ENCODE measurements at regions of chr7 and their contacts with region 1.

Region 1: DNA sequence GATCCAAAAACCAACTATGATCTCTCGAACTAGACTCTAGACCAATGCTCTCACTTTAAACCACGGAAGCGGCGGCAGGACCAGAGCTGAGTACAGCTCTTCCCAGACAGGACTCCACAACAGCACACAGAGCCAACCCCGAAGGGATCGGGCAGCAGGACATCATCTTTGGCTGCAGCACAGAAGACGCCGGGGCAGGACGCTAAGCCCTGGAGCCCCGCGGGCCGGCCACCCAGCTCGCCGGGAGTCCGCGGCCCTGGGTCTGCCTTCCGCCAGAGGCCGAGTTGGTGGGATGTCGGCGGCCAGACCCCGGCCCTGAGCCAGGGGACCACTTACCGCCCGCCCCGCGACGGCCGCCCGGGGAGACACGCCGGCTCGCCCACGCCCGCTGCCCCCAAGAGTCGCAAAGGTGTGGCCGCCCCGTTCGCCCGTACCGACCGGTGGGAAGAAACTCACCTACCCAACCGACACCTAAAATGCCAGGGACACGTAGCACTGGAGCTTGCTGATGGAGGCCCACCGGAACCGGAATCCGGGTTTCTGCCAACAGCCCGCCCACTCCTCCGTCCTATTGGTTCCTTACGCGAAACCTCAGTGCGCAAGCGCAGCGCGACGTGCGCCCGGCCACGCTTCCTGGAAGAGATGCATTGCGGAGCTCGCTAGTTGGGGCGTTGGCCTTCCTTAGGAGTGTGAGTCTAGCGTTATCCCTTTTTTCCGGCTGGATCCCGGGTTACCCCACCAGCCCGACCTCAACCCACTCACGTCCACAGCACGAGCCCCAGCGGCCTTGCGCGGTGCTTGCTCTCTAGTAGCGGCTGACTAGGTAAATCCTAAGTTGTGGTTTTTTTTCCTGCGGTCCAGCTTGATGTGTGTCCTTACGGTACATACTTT is at the start of gene SEC61G:
- DNase-seq: peak; percentile 97
- H3K4me3 Mint-ChIP-seq: peak within 1 kb of the TSS; percentile 100
- H3K27ac Mint-ChIP-seq: peak within 1 kb of the TSS; percentile 94
- H3K4me1 Mint-ChIP-seq: peaks cover 24% of the 10 kb centered on the region
- H3K27me3 Mint-ChIP-seq: peaks cover 4% of the 10 kb centered on the region
- total RNA-seq, gene SEC61G: 171 to 177 TPM

Region 2: DNA sequence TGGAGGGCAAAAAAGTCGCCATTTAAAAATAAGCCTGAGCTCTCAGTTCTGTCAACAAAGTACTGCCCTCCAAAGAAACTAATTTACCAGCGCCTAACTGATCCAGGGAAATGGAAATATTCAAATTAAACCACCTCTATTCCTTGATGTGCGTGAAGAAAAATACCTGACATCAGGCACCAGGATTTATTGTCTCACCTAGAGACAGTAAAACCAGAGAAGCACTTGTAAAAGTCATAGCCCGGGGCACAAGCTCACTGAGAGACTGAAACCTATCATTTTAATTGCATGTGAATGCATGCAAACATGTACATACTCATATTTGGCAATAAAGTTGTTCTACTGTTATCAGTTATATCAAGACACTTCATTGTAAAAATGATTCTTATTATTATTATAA is 364.1 kb before region 1 on chr7:
- CTCF ChIA-PET with region 1: no interaction called
- POLR2A ChIA-PET with region 1: no interaction called
- intact Hi-C with region 1: loop called (anchors 5 kb)
- DNase-seq: no peak
- H3K4me3 Mint-ChIP-seq: no peak overlapping the region
- H3K27ac Mint-ChIP-seq: no peak overlapping the region
- H3K4me1 Mint-ChIP-seq: no peaks in the 10 kb centered on the region
- H3K27me3 Mint-ChIP-seq: no peaks in the 10 kb centered on the region

Region 3: DNA sequence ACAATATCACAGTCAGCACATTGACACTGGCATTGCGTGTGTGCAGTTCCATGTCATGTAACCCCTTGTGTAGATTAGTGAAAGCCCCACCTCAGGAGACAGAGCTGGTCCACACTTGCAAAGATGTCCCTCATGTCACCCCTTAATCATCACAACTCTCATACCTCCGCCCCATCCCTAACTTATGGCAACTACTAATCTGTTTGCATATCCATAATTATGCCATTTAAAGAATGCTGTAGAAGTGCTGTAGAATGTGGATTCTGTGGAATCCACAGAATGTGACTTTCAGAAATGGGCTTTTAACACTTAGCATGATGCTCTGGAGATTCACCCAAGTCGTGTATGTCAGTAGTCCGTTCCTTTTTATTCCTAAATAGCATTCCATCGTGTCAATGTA is 319.6 kb before region 1 on chr7:
- CTCF ChIA-PET with region 1: no interaction called
- POLR2A ChIA-PET with region 1: no interaction called
- intact Hi-C with region 1: no loop called
- DNase-seq: no peak
- H3K4me3 Mint-ChIP-seq: no peak overlapping the region
- H3K27ac Mint-ChIP-seq: no peak overlapping the region
- H3K4me1 Mint-ChIP-seq: no peaks in the 10 kb centered on the region
- H3K27me3 Mint-ChIP-seq: no peaks in the 10 kb centered on the region

Region 4: DNA sequence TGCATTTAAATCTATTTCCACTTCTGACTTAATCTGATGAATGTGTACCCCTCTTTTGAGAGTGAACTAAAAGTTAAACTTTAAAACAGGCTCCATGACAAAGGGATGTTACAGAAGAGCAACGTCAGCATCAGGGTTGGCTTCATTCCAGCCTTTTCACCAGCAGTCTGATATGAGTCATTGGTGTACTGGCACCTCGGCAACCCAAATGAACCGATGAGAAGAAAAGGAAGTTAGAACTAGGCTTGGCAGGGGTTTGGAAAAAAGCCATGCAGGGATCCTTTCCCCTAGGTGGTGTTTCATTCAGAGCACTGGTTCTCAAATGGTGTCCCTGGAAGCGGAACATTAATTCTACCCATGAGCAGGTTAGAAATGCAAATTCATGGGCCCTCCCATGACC is 53.5 kb before region 1 on chr7:
- CTCF ChIA-PET with region 1: no interaction called
- POLR2A ChIA-PET with region 1: no interaction called
- intact Hi-C with region 1: no loop called
- DNase-seq: no peak
- H3K4me3 Mint-ChIP-seq: no peak overlapping the region
- H3K27ac Mint-ChIP-seq: no peak overlapping the region
- H3K4me1 Mint-ChIP-seq: no peaks in the 10 kb centered on the region
- H3K27me3 Mint-ChIP-seq: no peaks in the 10 kb centered on the region

Region 5: DNA sequence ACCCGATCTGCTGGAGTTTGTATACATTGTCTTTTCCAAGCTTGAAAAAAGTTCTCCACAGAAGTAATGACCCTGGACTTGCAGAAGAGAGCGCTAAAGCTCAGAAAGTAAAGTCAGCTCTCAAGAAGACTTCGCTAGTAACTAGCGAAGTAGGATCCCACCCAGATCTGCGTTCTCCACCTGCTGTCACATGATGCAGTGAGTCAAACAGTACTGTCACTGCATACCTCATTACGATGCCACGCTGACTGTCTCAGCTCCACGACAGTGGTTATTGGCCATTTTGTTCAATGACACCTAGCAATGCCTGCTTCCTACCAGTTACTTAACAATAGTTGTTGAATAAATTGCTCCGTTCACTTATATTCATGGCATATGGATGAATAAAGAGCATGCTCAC is 29.7 kb after region 1 on chr7:
- CTCF ChIA-PET with region 1: no interaction called
- POLR2A ChIA-PET with region 1: no interaction called
- intact Hi-C with region 1: no loop called
- DNase-seq: peak; percentile 57
- H3K4me3 Mint-ChIP-seq: no peak overlapping the region
- H3K27ac Mint-ChIP-seq: no peak overlapping the region
- H3K4me1 Mint-ChIP-seq: peaks cover 5% of the 10 kb centered on the region
- H3K27me3 Mint-ChIP-seq: peaks cover 44% of the 10 kb centered on the region

Region 6: DNA sequence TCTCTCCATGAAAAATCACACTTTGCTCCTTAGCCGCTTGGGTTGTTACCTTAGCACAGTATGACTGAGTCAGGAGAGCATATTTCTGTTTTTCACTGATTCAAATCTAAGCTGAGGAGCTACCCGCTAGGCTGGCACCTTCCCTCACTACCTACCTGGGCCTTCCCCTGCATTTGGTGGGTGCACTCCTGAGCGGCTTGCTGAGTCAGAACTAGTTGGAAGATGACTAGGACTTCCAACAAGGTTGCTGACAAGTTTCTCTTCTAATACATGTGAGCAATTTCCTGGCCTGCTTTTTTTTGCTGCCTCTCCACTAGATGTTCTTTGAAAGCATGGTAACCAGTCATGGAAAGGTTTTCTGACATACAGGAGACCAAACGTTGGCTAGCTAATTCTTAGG is 43.9 kb after region 1 on chr7:
- CTCF ChIA-PET with region 1: no interaction called
- POLR2A ChIA-PET with region 1: no interaction called
- intact Hi-C with region 1: loop called (anchors 1 kb)
- DNase-seq: peak; percentile 72
- H3K4me3 Mint-ChIP-seq: no peak overlapping the region
- H3K27ac Mint-ChIP-seq: no peak overlapping the region
- H3K4me1 Mint-ChIP-seq: peaks cover 6% of the 10 kb centered on the region
- H3K27me3 Mint-ChIP-seq: peaks cover 16% of the 10 kb centered on the region

Region 7: DNA sequence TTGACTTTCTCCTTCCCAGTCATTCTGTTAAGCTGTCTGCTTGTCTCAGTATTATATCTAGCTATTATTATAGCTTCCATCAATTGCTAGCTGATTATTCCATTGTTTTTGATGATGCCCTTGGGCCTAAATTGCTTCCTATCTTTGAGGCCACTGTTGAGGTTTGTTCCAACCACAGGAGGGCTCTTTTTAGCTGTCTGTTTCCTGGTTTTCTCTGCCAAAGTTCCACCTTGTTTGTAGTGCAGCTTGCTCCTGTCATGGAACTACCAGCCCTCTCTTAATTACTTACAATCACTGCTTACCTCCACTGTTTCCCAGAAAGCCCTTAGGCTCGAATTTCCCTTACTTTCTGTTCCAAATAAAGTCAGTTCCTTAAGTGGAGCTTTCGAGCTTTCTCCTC is 118.7 kb after region 1 on chr7:
- CTCF ChIA-PET with region 1: no interaction called
- POLR2A ChIA-PET with region 1: no interaction called
- intact Hi-C with region 1: no loop called
- DNase-seq: no peak
- H3K4me3 Mint-ChIP-seq: no peak overlapping the region
- H3K27ac Mint-ChIP-seq: no peak overlapping the region
- H3K4me1 Mint-ChIP-seq: no peaks in the 10 kb centered on the region
- H3K27me3 Mint-ChIP-seq: peaks cover 1% of the 10 kb centered on the region

Region 8: DNA sequence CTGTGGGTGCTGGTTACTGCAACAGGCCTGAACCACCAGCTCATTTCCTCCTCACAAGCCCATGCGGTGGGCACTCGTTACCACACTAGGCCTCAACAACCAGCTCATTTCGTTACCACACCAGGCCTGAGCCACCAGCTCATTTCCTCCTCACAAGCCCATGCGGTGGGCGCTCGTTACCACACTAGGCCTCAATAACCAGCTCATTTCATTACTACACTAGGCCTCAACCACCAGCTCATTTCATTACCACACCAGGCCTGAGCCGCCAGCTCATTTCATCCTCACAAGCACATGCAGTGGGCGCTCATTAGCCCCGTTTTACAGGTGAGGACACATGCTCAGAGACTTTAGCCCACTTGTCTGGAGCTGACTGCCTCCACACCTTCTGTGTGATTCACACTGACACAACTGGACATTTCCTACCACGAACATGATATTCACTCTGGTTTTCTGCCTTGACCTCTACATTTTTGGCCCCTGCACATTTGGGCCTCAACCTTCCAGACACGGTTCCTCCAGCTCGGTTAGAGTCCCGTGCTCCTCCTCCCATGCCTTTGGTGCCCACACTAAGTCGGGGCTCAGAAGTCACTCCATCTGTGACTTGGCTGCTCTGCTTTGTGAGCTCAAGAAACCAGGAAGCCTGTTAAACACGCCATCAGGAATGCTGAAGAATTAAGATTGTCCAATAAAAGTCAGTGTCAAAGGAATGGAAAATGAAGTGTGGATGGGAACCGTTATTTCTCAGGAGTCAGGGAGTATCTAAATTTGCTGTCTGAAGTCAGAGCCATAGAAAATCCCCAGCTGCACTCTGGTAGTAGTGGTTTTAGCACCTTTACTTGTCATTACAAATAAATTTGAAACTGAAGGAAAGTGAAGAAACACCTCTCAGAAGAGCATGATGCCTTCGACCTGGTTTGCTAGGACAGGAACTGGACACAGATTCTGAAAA is 550.4 kb after region 1 on chr7:
- CTCF ChIA-PET with region 1: no interaction called
- POLR2A ChIA-PET with region 1: no interaction called
- intact Hi-C with region 1: loop called (anchors 1 kb)
- DNase-seq: peak; percentile 95
- H3K4me3 Mint-ChIP-seq: peak overlapping the region; percentile 16
- H3K27ac Mint-ChIP-seq: peak overlapping the region; percentile 90
- H3K4me1 Mint-ChIP-seq: peaks cover 43% of the 10 kb centered on the region
- H3K27me3 Mint-ChIP-seq: peaks cover 25% of the 10 kb centered on the region

Region 9: DNA sequence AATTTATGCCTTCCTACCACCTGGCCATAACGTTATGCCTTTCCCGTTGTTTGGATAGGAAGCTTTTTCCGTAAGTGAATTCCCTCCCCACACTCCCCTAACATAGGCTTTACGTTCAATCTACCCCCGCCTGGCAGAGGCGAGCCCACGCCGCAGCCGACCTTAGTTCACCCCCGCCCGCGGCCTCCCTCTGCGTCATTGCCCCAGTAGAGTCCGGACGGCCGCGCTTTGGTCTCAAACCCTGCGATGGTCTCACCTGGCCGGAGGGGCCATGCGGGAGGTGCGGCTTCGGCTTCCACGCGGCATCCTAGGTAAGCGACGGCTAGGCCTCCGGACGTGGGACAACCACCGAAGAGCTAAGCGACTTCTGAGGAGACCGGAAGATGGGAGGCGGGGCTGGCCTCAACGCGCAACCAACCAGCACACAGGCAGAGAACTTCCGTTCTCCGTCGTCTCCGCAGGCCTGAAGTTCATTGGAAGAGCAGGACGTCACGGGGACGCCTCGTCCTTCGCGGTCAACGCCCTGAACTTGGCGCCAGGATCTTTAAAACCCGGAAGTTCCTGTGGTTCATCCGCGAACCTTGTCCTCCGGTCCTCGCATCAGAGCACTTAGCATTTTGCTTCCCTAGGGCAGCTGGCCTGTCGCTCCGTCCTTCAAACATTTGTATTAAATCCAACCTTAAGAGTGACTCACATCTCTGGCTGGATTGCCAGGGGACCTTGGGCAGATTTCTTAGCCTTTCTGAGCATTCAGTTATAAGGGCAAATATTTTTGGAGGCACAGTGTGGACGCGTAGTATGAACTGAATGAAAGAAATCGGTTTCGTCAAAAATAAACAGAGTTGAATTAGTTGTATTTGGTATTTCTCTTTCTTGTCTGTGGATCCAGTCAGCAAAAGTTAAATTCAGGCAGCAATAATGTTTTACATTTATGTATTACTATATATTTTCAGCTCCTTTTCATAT is 1347.4 kb after region 1 on chr7 and contains the start of gene CHCHD2:
- CTCF ChIA-PET with region 1: no interaction called
- POLR2A ChIA-PET with region 1: interaction called, 3 read pairs
- intact Hi-C with region 1: loop called (anchors 2 kb)
- DNase-seq: peak; percentile 97
- H3K4me3 Mint-ChIP-seq: peak within 1 kb of the TSS; percentile 97
- H3K27ac Mint-ChIP-seq: peak within 1 kb of the TSS; percentile 94
- H3K4me1 Mint-ChIP-seq: peaks cover 30% of the 10 kb centered on the region
- H3K27me3 Mint-ChIP-seq: no peaks in the 10 kb centered on the region
- total RNA-seq, gene CHCHD2: 764 to 766 TPM

Measured in activated CD4-positive, alpha-beta memory T cell treated with anti-CD3 and anti-CD28 coated beads for 36 hours (primary cell).